ENCODE measurements at regions of chr3 and their contacts with region 1.

Region 1: GRCh38 chr3:16828815-16829214 is 55.9 kb upstream of the PLCL2 start:
- DNase-seq: peak; percentile 26
- ATAC-seq: no peak
- H3K4me3 ChIP-seq: no peak overlapping the region
- H3K27ac ChIP-seq: no peak overlapping the region
- H3K4me1 ChIP-seq: no peaks in the 10 kb centered on the region
- H3K27me3 ChIP-seq: peaks cover 3% of the 10 kb centered on the region; the same call in 1 of the 2 replicates
- CTCF ChIP-seq: peak; percentile 33; the same call in 1 of the 2 replicates
- POLR2A ChIP-seq: no peak
- RAD21 ChIP-seq: peak; percentile 41

Region 2: GRCh38 chr3:17032407-17033034 is 203.7 kb after region 1 on chr3:
- CTCF ChIA-PET with region 1: interaction called, 3 read pairs
- POLR2A ChIA-PET with region 1: no interaction called
- dilution Hi-C with region 1: no loop called
- in situ Hi-C with region 1: no loop called
- intact Hi-C with region 1: loop called (anchors 1 kb)
- DNase-seq: peak; percentile 36
- ATAC-seq: peak; percentile 80
- H3K4me3 ChIP-seq: no peak overlapping the region
- H3K27ac ChIP-seq: no peak overlapping the region
- H3K4me1 ChIP-seq: no peaks in the 10 kb centered on the region
- H3K27me3 ChIP-seq: no peaks in the 10 kb centered on the region
- CTCF ChIP-seq: peak; percentile 49
- POLR2A ChIP-seq: no peak
- RAD21 ChIP-seq: peak; percentile 50

Region 3: DNA sequence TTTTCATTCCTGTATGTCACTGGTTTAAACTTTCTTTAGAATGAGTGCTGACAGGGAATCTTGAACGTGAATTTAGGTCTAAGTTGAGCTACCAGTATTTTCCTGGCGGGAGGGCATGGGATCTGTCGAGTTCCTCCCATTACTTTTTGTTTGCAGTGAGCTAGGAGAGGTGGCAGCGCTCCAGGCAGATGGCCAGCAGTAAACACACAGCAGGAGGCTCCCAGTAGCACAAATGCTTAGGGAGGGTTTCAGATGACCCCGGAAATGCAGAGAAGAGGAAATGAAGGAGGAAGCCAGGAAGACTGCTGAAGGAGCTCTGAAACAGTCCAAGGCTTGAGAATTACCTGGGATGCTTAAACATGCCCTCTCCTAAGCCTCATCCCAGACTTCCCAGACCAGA is 241.8 kb after region 1 on chr3:
- CTCF ChIA-PET with region 1: no interaction called
- POLR2A ChIA-PET with region 1: no interaction called
- dilution Hi-C with region 1: no loop called
- in situ Hi-C with region 1: no loop called
- intact Hi-C with region 1: no loop called
- DNase-seq: peak; percentile 39
- ATAC-seq: peak; percentile 69; the same call in 1 of the 2 replicates
- H3K4me3 ChIP-seq: no peak overlapping the region
- H3K27ac ChIP-seq: no peak overlapping the region
- H3K4me1 ChIP-seq: peaks cover 3% of the 10 kb centered on the region; the same call in 1 of the 2 replicates
- H3K27me3 ChIP-seq: no peaks in the 10 kb centered on the region
- CTCF ChIP-seq: no peak
- POLR2A ChIP-seq: no peak
- RAD21 ChIP-seq: no peak